B cell (primary cell): ENCODE measurements at regions of chr6 and their contacts with region 1.

Region 1: GRCh38 chr6:10800829-10801535 is 37.4 kb downstream of the MAK start:
- DNase-seq: peak; percentile 73
- ATAC-seq: peak; percentile 83
- H3K4me3 ChIP-seq: no peak overlapping the region
- H3K4me3 Mint-ChIP-seq: no peak overlapping the region
- H3K27ac ChIP-seq: no peak overlapping the region
- H3K27ac Mint-ChIP-seq: no peak overlapping the region
- H3K4me1 ChIP-seq: no peaks in the 10 kb centered on the region
- H3K4me1 Mint-ChIP-seq: no peaks in the 10 kb centered on the region
- H3K27me3 ChIP-seq: no peaks in the 10 kb centered on the region
- H3K27me3 Mint-ChIP-seq: no peaks in the 10 kb centered on the region
- CTCF ChIP-seq: peak; percentile 99

Region 2: GRCh38 chr6:10478187-10479040 is 322.6 kb before region 1 on chr6:
- CTCF ChIA-PET with region 1: interaction called, 128 read pairs
- POLR2A ChIA-PET with region 1: no interaction called
- intact Hi-C with region 1: no loop called
- DNase-seq: peak; percentile 60
- ATAC-seq: peak; percentile 21
- H3K4me3 ChIP-seq: no peak overlapping the region
- H3K4me3 Mint-ChIP-seq: no peak overlapping the region
- H3K27ac ChIP-seq: no peak overlapping the region
- H3K27ac Mint-ChIP-seq: no peak overlapping the region
- H3K4me1 ChIP-seq: no peaks in the 10 kb centered on the region
- H3K4me1 Mint-ChIP-seq: no peaks in the 10 kb centered on the region
- H3K27me3 ChIP-seq: no peaks in the 10 kb centered on the region
- H3K27me3 Mint-ChIP-seq: peaks cover 30% of the 10 kb centered on the region
- CTCF ChIP-seq: peak; percentile 80

Region 3: GRCh38 chr6:10505529-10505928 is 295.5 kb before region 1 on chr6:
- CTCF ChIA-PET with region 1: interaction called, 98 read pairs
- POLR2A ChIA-PET with region 1: no interaction called
- intact Hi-C with region 1: no loop called
- DNase-seq: no peak
- ATAC-seq: no peak
- H3K4me3 ChIP-seq: no peak overlapping the region
- H3K4me3 Mint-ChIP-seq: no peak overlapping the region
- H3K27ac ChIP-seq: no peak overlapping the region
- H3K27ac Mint-ChIP-seq: no peak overlapping the region
- H3K4me1 ChIP-seq: peaks cover 0 to under 1% of the 10 kb centered on the region in 2 donors
- H3K4me1 Mint-ChIP-seq: peaks cover 3% of the 10 kb centered on the region
- H3K27me3 ChIP-seq: peaks cover 0 to 4% (median 3%) of the 10 kb centered on the region in 4 experiments
- H3K27me3 Mint-ChIP-seq: peaks cover 23% of the 10 kb centered on the region
- CTCF ChIP-seq: no peak

Region 4: DNA sequence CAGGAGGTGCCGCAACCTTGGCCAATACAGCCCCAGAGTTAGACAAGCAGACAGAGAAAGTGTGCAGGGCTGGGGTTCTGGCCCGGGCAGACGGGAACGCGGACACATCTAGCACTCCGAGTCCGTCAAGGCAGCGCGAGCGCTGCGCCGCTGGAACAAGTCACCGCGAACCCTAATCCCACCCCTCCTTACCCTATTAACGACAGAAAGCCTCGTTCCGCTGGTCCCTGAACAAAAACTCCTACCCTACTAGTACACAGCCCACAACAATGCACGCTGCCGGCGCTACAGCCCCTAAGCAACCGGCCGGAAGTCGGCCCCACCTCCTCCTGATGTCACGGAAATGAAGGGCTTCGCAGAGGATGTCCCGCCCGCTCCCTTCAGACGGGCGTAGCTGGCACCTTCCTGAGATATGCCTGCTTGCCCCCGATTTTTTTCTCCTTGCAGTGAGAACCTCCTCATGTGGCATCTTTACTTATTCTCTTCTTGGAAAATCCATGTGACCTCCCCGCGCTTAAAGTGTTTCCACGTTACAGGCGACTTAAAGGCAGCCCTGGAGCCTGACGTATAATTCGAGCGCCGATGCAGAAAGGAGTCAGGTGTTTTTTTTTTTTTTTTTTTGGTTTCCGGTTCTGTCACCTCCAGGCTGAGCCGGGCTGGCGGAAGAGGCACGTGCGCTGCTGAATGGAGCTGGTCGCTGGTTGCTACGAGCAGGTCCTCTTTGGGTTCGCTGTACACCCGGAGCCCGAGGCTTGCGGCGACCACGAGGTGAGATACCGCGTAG is 106.5 kb before region 1 on chr6 and contains the starts of genes C6orf52 and PAK1IP1:
- CTCF ChIA-PET with region 1: interaction called, 3 read pairs
- POLR2A ChIA-PET with region 1: no interaction called
- intact Hi-C with region 1: loop called (anchors 1 kb)
- DNase-seq: peak; percentile 98
- ATAC-seq: peak; percentile 94
- H3K4me3 ChIP-seq: peak within 1 kb of the TSS; percentile 73 to 97 (median 95)
- H3K4me3 Mint-ChIP-seq: peak within 1 kb of the TSS; percentile 97
- H3K27ac ChIP-seq: peak within 1 kb of the TSS; percentile 96 to 99
- H3K27ac Mint-ChIP-seq: peak within 1 kb of the TSS; percentile 100
- H3K4me1 ChIP-seq: peaks cover 16 to 28% of the 10 kb centered on the region in 2 donors
- H3K4me1 Mint-ChIP-seq: peaks cover 30% of the 10 kb centered on the region
- H3K27me3 ChIP-seq: no peaks in the 10 kb centered on the region
- H3K27me3 Mint-ChIP-seq: no peaks in the 10 kb centered on the region
- CTCF ChIP-seq: no peak
- total RNA-seq, gene C6orf52: 1.2 TPM in 1 of 2 replicates, not detected in the other
- total RNA-seq, gene PAK1IP1: 6.1 TPM in 2 replicates

Region 5: GRCh38 chr6:11064836-11065235 is 263.9 kb after region 1 on chr6:
- CTCF ChIA-PET with region 1: interaction called, 11 read pairs
- POLR2A ChIA-PET with region 1: no interaction called
- intact Hi-C with region 1: loop called (anchors 5 kb)
- DNase-seq: no peak
- ATAC-seq: no peak
- H3K4me3 ChIP-seq: no peak overlapping the region
- H3K4me3 Mint-ChIP-seq: no peak overlapping the region
- H3K27ac ChIP-seq: no peak overlapping the region
- H3K27ac Mint-ChIP-seq: no peak overlapping the region
- H3K4me1 ChIP-seq: no peaks in the 10 kb centered on the region
- H3K4me1 Mint-ChIP-seq: no peaks in the 10 kb centered on the region
- H3K27me3 ChIP-seq: peaks cover 0 to 3% (median 3%) of the 10 kb centered on the region in 4 experiments
- H3K27me3 Mint-ChIP-seq: peaks cover 18% of the 10 kb centered on the region
- CTCF ChIP-seq: no peak